ENCODE measurements at regions of chr18 and their contacts with region 1.

Region 1: GRCh38 chr18:57780706-57781347 is 22.3 kb downstream of the ATP8B1 start:
- DNase-seq: peak; percentile 17
- ATAC-seq: peak; percentile 96
- H3K4me3 ChIP-seq: no peak overlapping the region
- H3K27ac ChIP-seq: no peak overlapping the region
- H3K4me1 ChIP-seq: peaks cover 3% of the 10 kb centered on the region; the same call in 1 of the 2 replicates
- H3K27me3 ChIP-seq: no peaks in the 10 kb centered on the region
- CTCF ChIP-seq: no peak
- EP300 ChIP-seq: no peak
- POLR2A ChIP-seq: no peak
- RAD21 ChIP-seq: no peak

Region 2: DNA sequence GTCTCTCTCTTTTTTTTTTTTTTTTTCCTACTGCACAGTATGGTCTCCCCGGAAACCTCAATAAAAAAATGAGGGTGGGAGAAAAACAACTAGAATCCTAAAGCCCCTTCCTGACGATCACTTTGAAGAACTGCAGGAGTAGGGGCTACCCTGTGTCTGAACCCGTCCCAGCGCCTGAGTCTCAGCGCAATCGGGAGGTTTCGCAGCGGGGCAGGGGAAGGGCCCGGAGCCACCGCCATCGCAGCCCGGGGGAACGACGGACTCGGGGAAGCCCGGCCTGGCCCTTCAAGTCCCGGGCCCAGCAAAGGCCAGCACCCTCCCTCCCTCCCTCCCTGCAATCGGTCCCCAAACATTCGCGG is 159.6 kb before region 1 on chr18:
- CTCF ChIA-PET with region 1: no interaction called
- POLR2A ChIA-PET with region 1: no interaction called
- RAD21 ChIA-PET with region 1: no interaction called
- SMC1A ChIA-PET with region 1: no interaction called
- in situ Hi-C with region 1: no loop called
- intact Hi-C with region 1: no loop called
- DNase-seq: no peak
- ATAC-seq: peak; percentile 55
- H3K4me3 ChIP-seq: peak overlapping the region; percentile 99
- H3K27ac ChIP-seq: peak overlapping the region; percentile 87
- H3K4me1 ChIP-seq: no peaks in the 10 kb centered on the region; the same call in 1 of the 2 replicates
- H3K27me3 ChIP-seq: no peaks in the 10 kb centered on the region
- CTCF ChIP-seq: no peak
- EP300 ChIP-seq: no peak
- POLR2A ChIP-seq: no peak
- RAD21 ChIP-seq: no peak

Region 3: DNA sequence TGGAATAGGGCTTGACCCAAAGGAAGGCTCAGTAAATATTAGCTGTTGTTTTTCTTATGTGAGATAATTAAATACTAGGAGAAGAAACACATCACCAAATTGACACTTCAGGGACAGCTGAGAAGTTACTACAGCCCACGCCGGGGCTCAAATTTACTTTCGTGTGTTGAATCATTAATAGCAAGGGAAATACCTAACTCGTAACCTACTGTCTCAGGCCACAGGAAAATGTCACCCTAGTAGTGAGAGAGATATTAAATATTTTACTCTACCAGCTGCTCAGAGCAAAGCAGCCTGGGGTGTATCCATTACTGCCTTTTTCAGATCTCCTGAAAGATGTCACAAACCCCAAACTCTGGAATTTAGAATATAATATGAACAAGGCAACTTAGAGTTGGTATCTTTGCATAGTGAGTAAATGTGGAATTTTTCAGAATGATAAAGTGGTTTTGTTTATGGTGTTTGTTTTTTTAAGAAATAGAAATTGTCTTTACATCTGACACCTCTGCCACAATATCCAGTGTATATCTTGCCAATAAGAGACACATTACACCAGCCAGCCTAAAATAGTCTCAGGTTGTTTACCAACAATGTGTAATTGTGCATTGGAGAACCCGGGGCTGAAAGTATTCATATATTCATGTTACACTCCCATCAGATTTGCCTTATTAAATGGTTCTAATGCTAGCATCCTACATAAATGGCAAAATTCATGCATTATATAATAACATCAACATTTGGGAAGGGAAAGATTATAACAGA is 26.1 kb before region 1 on chr18:
- CTCF ChIA-PET with region 1: no interaction called
- POLR2A ChIA-PET with region 1: no interaction called
- RAD21 ChIA-PET with region 1: no interaction called
- SMC1A ChIA-PET with region 1: interaction called, 10 read pairs
- in situ Hi-C with region 1: no loop called
- intact Hi-C with region 1: no loop called
- DNase-seq: peak; percentile 38
- ATAC-seq: peak; percentile 96
- H3K4me3 ChIP-seq: no peak overlapping the region
- H3K27ac ChIP-seq: no peak overlapping the region
- H3K4me1 ChIP-seq: no peaks in the 10 kb centered on the region
- H3K27me3 ChIP-seq: no peaks in the 10 kb centered on the region
- CTCF ChIP-seq: no peak
- EP300 ChIP-seq: peak in 1 of 2 experiments; percentile 63; a peak in 1 of 4 replicates
- POLR2A ChIP-seq: no peak
- RAD21 ChIP-seq: no peak

Region 4: GRCh38 chr18:57833443-57834101 is 52.7 kb after region 1 on chr18:
- CTCF ChIA-PET with region 1: no interaction called
- POLR2A ChIA-PET with region 1: no interaction called
- RAD21 ChIA-PET with region 1: no interaction called
- SMC1A ChIA-PET with region 1: interaction called, 3 read pairs
- in situ Hi-C with region 1: no loop called
- intact Hi-C with region 1: loop called (anchors 2 kb)
- DNase-seq: peak; percentile 55
- ATAC-seq: peak; percentile 52
- H3K4me3 ChIP-seq: peak overlapping the region; percentile 20; the same call in 1 of the 2 replicates
- H3K27ac ChIP-seq: peak overlapping the region; percentile 82
- H3K4me1 ChIP-seq: peaks cover 20% of the 10 kb centered on the region
- H3K27me3 ChIP-seq: no peaks in the 10 kb centered on the region
- CTCF ChIP-seq: no peak
- EP300 ChIP-seq: no peak
- POLR2A ChIP-seq: no peak
- RAD21 ChIP-seq: no peak

Region 5: GRCh38 chr18:57881818-57882413 is 101.1 kb after region 1 on chr18:
- CTCF ChIA-PET with region 1: no interaction called
- POLR2A ChIA-PET with region 1: no interaction called
- RAD21 ChIA-PET with region 1: no interaction called
- SMC1A ChIA-PET with region 1: no interaction called
- in situ Hi-C with region 1: no loop called
- intact Hi-C with region 1: no loop called
- DNase-seq: peak; percentile 32
- ATAC-seq: peak; percentile 98
- H3K4me3 ChIP-seq: no peak overlapping the region
- H3K27ac ChIP-seq: no peak overlapping the region
- H3K4me1 ChIP-seq: no peaks in the 10 kb centered on the region
- H3K27me3 ChIP-seq: no peaks in the 10 kb centered on the region
- CTCF ChIP-seq: peak; percentile 89 to 94 (median 90); a peak in 5 of 6 replicates
- EP300 ChIP-seq: no peak
- POLR2A ChIP-seq: no peak
- RAD21 ChIP-seq: peak; percentile 93

Measured in GM12878 (cell line).